Left ventricle myocardium inferior (tissue), 1 donor: ENCODE measurements at regions of chr4 and their contacts with region 1.

Region 1: GRCh38 chr4:38319456-38320342 is 344.3 kb upstream of the KLF3 start:
- DNase-seq: peak; percentile 95
- H3K4me3 ChIP-seq: peak overlapping the region; percentile 58
- H3K27ac ChIP-seq: peak overlapping the region; percentile 90
- H3K4me1 ChIP-seq: peaks cover 24% of the 10 kb centered on the region
- H3K27me3 ChIP-seq: no peaks in the 10 kb centered on the region
- CTCF ChIP-seq: peak; percentile 99

Region 2: DNA sequence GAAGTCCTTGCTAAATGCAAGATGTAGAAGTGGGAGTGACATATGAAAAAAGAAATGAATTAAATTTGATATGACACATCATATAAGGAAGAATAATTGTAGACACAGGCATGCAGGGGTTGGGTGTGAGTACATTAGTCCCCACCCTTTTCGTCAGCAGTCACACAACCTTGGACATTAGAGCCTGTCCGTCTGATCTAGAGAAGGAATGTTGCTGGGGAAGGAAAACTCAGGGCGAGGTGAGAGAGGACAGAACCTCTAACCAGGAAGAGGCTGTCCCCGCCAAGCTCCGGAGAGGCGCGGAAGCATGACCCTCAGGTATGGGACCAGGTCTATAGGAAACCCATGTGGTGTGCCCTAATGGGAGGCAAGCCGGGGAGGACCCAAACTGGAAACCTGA is 735.6 kb before region 1 on chr4:
- intact Hi-C with region 1: no loop called
- DNase-seq: no peak
- H3K4me3 ChIP-seq: no peak overlapping the region
- H3K27ac ChIP-seq: no peak overlapping the region
- H3K4me1 ChIP-seq: no peaks in the 10 kb centered on the region
- H3K27me3 ChIP-seq: no peaks in the 10 kb centered on the region
- CTCF ChIP-seq: no peak

Region 3: DNA sequence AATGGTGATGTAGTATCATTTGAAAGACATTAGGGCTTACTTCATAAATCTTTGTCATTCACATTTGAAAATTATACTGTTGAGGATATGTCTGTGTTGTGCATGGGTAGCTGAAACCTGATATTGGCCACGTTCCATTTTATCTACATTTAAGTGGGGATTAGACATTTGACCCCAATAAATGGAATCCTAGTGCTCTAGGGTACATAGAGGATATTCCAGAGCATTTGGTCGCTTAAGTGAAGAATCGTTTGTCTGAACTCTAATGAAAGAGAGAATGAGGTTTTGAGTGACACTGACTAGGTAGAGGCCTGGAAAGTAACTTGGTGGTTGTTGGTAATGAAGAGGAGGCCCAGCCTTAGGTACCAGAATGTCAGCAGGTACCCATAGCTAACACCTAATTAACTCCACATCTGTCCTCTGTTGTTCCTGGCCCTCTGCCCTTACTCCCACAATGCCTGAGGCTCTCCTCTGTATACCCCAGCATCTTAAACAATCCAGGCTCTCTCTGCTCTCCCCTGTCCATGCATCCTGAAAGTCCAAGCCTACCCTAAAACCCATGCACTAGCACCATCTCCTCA is 44.8 kb after region 1 on chr4:
- intact Hi-C with region 1: no loop called
- DNase-seq: no peak
- H3K4me3 ChIP-seq: no peak overlapping the region
- H3K27ac ChIP-seq: no peak overlapping the region
- H3K4me1 ChIP-seq: peaks cover 21% of the 10 kb centered on the region
- H3K27me3 ChIP-seq: no peaks in the 10 kb centered on the region
- CTCF ChIP-seq: no peak

Region 4: DNA sequence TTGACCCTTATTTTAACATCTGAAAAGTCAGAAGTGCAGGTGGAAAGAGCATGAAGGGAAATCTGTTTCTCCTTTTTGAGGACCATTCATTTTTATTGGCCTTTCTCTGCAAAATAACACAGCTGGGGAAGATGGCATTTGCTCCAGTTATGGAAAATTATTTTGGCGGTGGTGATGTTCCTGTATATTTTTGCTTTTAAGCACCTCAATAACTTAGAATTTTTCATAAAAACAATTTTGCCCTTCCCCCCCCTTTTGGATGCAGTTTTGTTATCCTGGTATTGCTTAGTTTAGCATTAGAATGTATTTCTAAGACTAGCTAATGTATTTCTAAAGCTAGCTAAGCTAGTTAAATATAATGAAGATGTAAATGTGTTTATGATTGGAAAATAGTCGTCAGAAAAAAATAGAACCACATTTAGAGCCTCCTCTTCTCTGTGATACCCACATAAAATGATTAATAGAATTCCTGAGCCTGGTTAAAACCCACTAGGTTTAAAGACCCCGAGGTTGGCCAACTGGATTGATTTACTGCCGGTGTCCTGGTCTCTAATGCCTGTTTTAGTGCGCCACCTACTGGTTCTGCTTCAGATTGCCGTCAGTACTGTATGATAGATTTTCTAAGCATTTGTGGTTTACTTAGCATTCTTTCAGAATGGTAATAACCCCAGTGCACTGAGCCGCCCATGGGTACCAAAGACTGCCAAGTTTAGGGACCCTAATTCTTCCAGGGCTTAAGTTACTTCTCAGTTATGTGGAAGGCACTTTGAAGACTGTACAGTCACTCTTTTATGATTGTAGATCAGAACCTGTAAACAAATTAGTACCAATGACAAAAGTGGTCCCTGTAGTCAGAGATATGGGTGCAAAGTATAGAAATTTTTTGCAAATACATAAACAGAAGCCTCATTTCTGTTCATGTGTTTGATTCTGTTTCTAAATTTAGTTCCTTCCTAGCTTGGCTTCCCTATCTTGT is 355.7 kb after region 1 on chr4:
- intact Hi-C with region 1: loop called (anchors 5 kb)
- DNase-seq: peak; percentile 58
- H3K4me3 ChIP-seq: peak overlapping the region; percentile 74
- H3K27ac ChIP-seq: peak overlapping the region; percentile 100
- H3K4me1 ChIP-seq: peaks cover 100% of the 10 kb centered on the region
- H3K27me3 ChIP-seq: no peaks in the 10 kb centered on the region
- CTCF ChIP-seq: peak; percentile 92